ENCODE measurements at regions of chr13 and their contacts with region 1.

Region 1: DNA sequence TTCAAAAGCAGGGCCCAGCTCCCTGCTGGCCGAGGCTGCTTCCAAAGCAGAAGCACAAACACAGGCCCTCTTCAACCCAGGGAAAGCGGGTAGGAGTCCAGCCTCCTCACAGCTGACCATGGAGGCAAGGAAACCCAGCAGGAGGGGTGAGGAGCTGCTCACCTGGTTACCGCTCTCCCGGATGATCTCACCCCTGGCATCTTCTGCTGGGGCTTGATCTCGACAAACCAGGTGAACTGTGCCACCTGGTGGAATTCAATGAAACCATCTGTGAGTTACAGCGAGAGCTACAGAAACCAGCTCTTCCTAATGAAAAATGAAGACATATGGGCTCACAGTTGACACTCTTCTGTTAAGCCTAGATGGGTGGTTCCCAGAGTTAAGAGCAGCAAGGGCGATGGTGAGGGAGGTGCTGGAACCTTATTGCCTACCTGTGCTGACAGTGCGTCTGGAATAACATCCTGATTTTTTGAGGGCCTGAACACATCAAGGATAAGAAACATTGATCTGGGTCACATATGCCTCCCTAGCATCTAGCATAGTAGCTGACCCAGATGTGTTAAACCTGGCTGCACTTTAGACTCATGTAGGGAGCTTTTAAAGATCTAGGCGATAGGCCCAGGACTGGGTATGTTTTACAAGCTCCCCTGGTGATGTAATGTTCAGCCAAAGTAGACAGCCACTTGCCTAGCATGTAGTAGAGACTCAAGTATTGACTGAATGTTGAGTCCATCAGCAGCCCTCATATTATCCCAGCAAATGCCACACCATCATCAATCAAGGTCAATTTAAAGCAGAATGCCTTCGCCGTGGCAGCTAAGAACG is 6.1 kb downstream of the DHRS12 start:
- DNase-seq: peak; percentile 90 to 96 (median 94)
- ATAC-seq: peak; percentile 88
- H3K4me3 ChIP-seq: no peak overlapping the region
- H3K27ac ChIP-seq: peak overlapping the region; percentile 55 to 79 (median 74)
- H3K4me1 ChIP-seq: peaks cover 82% of the 10 kb centered on the region
- H3K27me3 ChIP-seq: no peaks in the 10 kb centered on the region
- CTCF ChIP-seq: peak; percentile 48 to 94 (median 91)
- POLR2A ChIP-seq: peak in 1 of 3 donors; percentile 22

Region 2: GRCh38 chr13:51444922-51445321 is 353.0 kb before region 1 on chr13:
- intact Hi-C with region 1: loop called (anchors 10 kb)
- DNase-seq: no peak
- ATAC-seq: no peak
- H3K4me3 ChIP-seq: no peak overlapping the region
- H3K27ac ChIP-seq: no peak overlapping the region
- H3K4me1 ChIP-seq: peaks cover 38% of the 10 kb centered on the region
- H3K27me3 ChIP-seq: no peaks in the 10 kb centered on the region
- CTCF ChIP-seq: peak in 5 of 7 experiments; percentile 13 to 36 (median 25)
- POLR2A ChIP-seq: no peak

Region 3: GRCh38 chr13:52001120-52001731 is 203.3 kb after region 1 on chr13:
- intact Hi-C with region 1: no loop called
- DNase-seq: no peak
- ATAC-seq: peak; percentile 47
- H3K4me3 ChIP-seq: no peak overlapping the region
- H3K27ac ChIP-seq: no peak overlapping the region
- H3K4me1 ChIP-seq: peaks cover 33% of the 10 kb centered on the region
- H3K27me3 ChIP-seq: no peaks in the 10 kb centered on the region
- CTCF ChIP-seq: peak in 6 of 7 experiments; percentile 55 to 72 (median 65)
- POLR2A ChIP-seq: no peak

Measured in body of pancreas (tissue), 4 donors.